Endothelial cell of umbilical vein (primary cell): ENCODE measurements at regions of chr2 and their contacts with region 1.

Region 1: DNA sequence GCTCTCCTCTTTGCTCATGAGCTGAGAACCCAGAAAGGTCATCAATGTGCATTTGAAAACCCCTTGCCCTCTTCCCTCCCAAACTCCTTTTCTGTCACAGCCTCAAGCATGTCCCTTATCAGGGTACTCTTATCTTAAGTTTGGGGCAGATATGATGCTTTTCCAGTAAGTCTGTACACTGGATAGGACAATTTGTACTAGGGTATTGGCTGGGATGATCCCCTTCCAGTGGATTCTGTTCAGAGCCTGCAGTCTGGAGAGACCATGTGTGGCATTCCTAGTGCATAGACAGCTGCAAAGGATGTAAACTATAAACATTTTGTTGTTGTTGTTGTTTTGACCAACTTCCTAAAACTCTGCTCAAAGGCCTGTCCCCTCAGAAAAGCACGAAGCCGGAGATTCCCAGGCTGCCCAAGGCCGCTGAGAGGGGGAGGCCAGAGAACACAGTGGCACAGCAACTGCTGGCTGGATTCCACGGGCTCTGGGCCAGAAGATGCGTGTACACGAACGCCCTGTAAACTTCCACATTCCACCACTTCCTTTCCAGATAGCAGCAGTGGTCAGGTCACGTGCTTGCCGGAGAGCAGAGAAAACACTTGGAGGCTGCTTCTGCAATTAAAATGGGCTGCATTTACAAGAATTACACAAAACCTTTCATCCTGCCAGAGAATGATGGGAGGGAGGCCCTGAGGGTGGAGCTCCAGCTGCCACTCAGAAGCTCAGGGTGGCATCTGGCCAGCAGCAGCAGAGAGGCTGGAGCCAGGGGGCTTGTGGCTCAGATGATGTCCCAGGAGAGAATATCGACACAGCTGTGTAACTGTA is 42.1 kb downstream of the BMP10 start:
- DNase-seq: peak; percentile 99
- H3K4me3 ChIP-seq: no peak overlapping the region
- H3K27ac ChIP-seq: peak overlapping the region; percentile 70
- H3K4me1 ChIP-seq: peaks cover 43% of the 10 kb centered on the region
- H3K27me3 ChIP-seq: no peaks in the 10 kb centered on the region
- CTCF ChIP-seq: no peak
- POLR2A ChIP-seq: no peak

Region 2: GRCh38 chr2:68774569-68775271 is 54.4 kb before region 1 on chr2:
- CTCF ChIA-PET with region 1: interaction called, 5 read pairs
- POLR2A ChIA-PET with region 1: no interaction called
- dilution Hi-C with region 1: no loop called
- intact Hi-C with region 1: loop called (anchors 1 kb)
- DNase-seq: peak; percentile 77
- H3K4me3 ChIP-seq: peak overlapping the region in 1 of 3 experiments; percentile 12
- H3K27ac ChIP-seq: peak overlapping the region; percentile 53
- H3K4me1 ChIP-seq: peaks cover 19% of the 10 kb centered on the region
- H3K27me3 ChIP-seq: no peaks in the 10 kb centered on the region
- CTCF ChIP-seq: peak in 1 of 2 donors; percentile 22
- POLR2A ChIP-seq: no peak

Region 3: DNA sequence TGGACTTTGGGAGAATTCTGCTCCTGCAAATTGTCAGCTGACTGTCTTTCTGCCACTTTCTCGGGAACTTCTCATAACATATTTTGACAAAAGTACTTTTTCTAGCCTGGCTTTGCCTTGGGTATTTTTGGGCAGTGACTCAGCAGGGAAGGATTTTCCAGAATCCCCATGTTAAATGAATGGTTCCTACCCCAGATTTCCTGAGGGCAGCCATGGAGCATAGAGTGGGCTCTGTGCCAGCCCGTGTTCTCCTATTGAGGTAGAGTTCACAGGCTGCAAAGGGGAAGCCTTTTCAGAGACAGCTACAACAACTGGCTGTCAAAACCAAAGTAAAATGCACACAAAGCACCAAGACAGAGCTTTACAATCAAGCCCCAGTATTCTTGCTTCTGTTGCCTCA is 17.7 kb before region 1 on chr2:
- CTCF ChIA-PET with region 1: interaction called, 4 read pairs
- POLR2A ChIA-PET with region 1: no interaction called
- dilution Hi-C with region 1: no loop called
- intact Hi-C with region 1: loop called (anchors 1 kb)
- DNase-seq: peak; percentile 91
- H3K4me3 ChIP-seq: peak overlapping the region in 1 of 3 experiments; percentile 25
- H3K27ac ChIP-seq: peak overlapping the region; percentile 62
- H3K4me1 ChIP-seq: peaks cover 23% of the 10 kb centered on the region
- H3K27me3 ChIP-seq: no peaks in the 10 kb centered on the region
- CTCF ChIP-seq: no peak
- POLR2A ChIP-seq: no peak

Region 4: GRCh38 chr2:68870215-68870614 is 41.1 kb after region 1 on chr2:
- CTCF ChIA-PET with region 1: interaction called, 3 read pairs
- POLR2A ChIA-PET with region 1: no interaction called
- dilution Hi-C with region 1: no loop called
- intact Hi-C with region 1: loop called (anchors 2 kb)
- DNase-seq: peak; percentile 70
- H3K4me3 ChIP-seq: no peak overlapping the region
- H3K27ac ChIP-seq: peak overlapping the region; percentile 39
- H3K4me1 ChIP-seq: peaks cover 8% of the 10 kb centered on the region
- H3K27me3 ChIP-seq: no peaks in the 10 kb centered on the region
- CTCF ChIP-seq: no peak
- POLR2A ChIP-seq: no peak

Region 5: DNA sequence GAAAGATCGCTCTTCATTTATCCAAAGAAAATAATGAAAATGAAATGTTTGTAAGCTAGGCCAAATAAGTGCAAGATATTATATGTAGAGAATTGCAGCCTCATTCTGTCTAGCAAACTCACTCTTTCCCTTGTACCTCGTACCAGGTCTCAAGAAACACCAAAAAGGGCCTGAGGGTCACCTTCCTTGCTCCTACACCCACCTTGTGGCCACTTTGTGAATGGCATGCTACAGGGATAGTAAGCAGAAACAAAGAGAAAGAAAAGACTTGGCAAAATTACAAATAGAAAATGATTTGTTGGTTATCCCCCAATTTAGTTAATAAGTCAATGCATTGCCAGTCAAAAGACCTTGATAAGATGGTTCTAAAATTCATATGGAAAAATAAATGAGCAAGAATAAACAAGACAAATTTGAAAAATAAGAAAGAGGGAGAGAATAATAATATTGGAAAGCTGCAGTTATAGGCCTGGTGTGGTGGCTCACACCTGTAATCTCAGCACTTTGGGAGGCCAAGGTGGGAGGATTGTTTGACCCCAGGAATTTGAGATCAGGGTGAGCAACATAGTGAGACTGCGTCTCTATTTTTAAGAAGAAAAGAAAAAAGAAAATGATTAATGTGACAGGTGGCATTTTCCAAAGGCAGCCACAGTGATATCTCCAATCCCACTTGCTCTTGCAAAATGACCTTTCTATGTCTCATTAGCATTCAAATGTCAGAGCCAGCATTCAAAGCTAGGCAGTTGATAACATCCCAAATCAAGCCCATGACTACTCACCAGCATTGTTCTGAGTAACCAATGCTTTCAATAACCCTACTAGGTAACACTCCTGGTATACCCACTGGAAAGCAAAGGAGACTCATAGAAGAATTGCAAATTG is 80.9 kb after region 1 on chr2:
- CTCF ChIA-PET with region 1: interaction called, 10 read pairs
- POLR2A ChIA-PET with region 1: no interaction called
- dilution Hi-C with region 1: no loop called
- intact Hi-C with region 1: no loop called
- DNase-seq: peak; percentile 82
- H3K4me3 ChIP-seq: no peak overlapping the region
- H3K27ac ChIP-seq: no peak overlapping the region
- H3K4me1 ChIP-seq: peaks cover 32% of the 10 kb centered on the region
- H3K27me3 ChIP-seq: peaks cover 4 to 12% of the 10 kb centered on the region in 2 experiments
- CTCF ChIP-seq: peak; percentile 77 to 86
- POLR2A ChIP-seq: no peak

Region 6: DNA sequence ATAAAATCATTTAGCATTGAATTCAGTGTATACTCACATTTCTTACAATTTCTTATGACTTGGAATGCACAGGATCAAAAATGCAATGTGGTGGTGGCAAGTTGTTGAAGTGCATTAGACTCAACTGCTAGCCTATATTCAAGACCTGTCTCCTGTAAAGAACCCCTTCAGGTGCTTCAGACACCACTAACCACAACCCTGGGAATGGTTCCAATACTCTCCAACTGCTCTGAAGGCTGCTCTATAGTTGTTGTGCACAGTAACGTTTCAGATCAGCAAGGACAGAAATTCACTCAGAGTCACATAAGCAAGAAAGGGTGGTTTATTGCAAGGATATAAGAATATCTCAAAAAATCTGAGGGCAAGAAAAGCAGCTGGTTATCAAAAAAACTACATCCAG is 151.9 kb after region 1 on chr2:
- CTCF ChIA-PET with region 1: no interaction called
- POLR2A ChIA-PET with region 1: no interaction called
- dilution Hi-C with region 1: no loop called
- intact Hi-C with region 1: no loop called
- DNase-seq: no peak
- H3K4me3 ChIP-seq: no peak overlapping the region
- H3K27ac ChIP-seq: no peak overlapping the region
- H3K4me1 ChIP-seq: no peaks in the 10 kb centered on the region
- H3K27me3 ChIP-seq: peaks cover 13 to 21% of the 10 kb centered on the region in 2 experiments
- CTCF ChIP-seq: no peak
- POLR2A ChIP-seq: no peak

Region 7: DNA sequence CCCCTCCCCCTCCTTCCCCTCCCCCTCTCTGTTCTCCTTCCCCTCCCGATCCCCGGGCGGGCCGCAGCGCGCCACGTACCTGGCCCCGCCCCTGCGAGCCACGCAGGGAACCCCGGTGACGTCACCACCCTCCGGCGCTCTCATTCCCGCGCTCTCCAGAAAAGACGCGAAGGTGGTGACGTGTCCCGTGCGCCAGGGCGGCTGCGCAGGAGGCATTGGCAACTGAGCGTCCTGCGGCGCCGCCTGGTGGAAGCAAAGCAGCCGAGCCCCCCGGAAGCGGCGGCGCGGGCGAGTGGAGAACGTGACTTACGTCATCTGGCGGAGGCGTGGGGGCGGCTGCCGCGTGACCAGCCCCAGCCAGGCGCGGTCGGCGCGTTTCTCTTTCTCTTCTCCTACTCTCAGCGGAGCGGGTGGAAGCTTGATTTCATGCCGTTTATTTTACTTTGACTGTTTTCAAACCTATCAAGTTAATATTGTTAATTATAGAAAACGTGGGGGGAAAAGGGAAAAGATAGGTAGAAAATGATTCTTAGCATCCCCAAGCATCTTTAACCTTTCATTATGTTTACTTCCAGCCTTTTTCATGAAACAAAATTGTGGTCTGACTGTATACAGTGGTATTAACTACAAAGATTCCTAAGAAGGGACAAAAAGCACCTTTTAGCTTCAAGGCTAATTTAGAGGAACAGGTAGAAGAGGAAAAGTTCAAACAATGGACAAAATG is 1313.7 kb after region 1 on chr2:
- CTCF ChIA-PET with region 1: no interaction called
- POLR2A ChIA-PET with region 1: no interaction called
- dilution Hi-C with region 1: no loop called
- intact Hi-C with region 1: loop called (anchors 5 kb)
- DNase-seq: peak; percentile 100
- H3K4me3 ChIP-seq: peak overlapping the region; percentile 40 to 81 (median 47)
- H3K27ac ChIP-seq: peak overlapping the region; percentile 95
- H3K4me1 ChIP-seq: peaks cover 14% of the 10 kb centered on the region
- H3K27me3 ChIP-seq: no peaks in the 10 kb centered on the region
- CTCF ChIP-seq: peak; percentile 97 to 98
- POLR2A ChIP-seq: no peak